ENCODE measurements at regions of chr9 and their contacts with region 1.

Region 1: DNA sequence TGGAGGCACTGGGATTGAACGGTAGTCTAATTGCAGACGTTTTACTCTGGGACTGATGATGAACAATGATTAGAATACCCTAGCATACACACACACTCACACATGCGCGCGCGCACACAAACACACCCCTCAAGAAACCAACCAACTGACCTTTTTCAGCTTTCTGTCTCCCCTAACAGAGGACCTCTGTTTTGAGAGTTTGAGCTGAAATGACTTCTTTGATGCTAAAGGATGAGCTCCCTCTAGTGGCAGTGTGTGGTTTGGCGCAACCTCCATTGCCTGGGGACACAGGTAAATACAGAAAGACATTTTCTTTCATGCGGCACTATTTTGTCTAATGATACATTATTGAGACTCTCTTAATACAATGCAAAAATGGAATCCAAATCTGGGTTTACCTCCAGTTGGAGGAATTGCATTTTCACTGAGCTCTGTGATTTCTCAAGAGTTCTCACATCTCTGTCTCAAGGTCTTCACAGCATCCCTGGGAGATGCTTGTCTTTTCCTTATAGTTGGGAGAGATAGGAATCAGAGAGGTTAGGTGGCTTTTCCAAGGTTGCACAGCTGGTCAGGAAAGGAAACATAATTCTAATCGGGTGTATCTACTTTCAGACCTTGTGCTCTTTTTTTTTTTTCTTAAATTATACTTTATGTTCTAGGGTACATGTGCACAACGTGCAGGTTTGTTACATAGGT is 187.5 kb downstream of the TMEM38B start:
- DNase-seq: peak; percentile 47 to 71
- ATAC-seq: peak; percentile 87 to 95
- H3K4me3 ChIP-seq: no peak overlapping the region
- H3K27ac ChIP-seq: no peak overlapping the region
- H3K4me1 ChIP-seq: no peaks in the 10 kb centered on the region
- CTCF ChIP-seq: peak; percentile 64
- EP300 ChIP-seq: no peak
- POLR2A ChIP-seq: no peak
- RAD21 ChIP-seq: peak; percentile 56 to 68; a peak in 4 of 5 replicates

Region 2: DNA sequence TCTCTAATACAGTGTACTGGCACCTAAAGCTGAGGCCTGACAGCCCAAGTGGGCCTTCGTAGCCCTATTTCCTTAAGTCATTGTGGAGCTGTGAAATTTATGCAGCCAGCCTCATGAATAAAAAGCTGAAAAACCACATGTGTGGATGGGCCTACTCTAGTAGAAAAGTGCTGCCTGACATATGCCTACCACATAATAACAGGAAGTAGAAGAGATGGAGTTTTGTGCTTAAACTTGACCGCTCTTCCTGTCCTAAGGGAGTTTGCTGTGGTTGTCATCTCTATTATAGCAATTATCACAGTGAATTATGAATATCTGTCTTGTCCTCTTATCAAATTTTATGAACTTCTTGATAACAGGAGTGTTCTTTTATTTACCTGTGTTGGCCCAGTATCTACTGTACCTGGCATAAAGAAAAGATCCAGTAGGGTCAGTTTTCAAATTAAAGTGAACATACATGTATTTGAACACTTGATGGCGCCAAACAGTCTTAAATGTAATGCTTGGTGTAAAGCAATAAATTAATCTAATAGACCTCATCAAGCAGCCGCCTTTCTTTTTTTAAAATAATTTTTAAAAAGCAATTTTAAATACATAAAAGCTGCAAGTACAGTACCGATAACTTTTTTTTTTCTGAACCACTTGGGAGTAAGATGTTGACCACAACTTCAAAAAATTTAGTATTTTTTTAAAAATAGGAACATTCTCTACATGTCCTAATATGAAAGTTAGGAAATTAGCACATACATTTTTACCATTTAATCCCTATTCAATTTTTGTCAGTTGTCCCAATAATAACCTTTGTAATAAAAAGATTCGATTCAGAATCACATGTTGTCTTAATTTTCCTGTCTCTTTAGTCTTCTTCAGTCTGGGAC is 272.8 kb before region 1 on chr9:
- CTCF ChIA-PET with region 1: interaction called, 10 read pairs
- POLR2A ChIA-PET with region 1: no interaction called
- DNase-seq: peak; percentile 36 to 52
- ATAC-seq: peak; percentile 70 to 86; a peak in 5 of 6 replicates
- H3K4me3 ChIP-seq: no peak overlapping the region
- H3K27ac ChIP-seq: no peak overlapping the region
- H3K4me1 ChIP-seq: no peaks in the 10 kb centered on the region
- CTCF ChIP-seq: peak; percentile 67
- EP300 ChIP-seq: no peak
- POLR2A ChIP-seq: no peak
- RAD21 ChIP-seq: peak; percentile 58 to 69

Region 3: GRCh38 chr9:105842023-105842644 is 39.7 kb before region 1 on chr9:
- CTCF ChIA-PET with region 1: interaction called, 25 read pairs
- POLR2A ChIA-PET with region 1: no interaction called
- DNase-seq: peak; percentile 34 to 47
- ATAC-seq: 0 out of 6 replicates have a peak, but pooled peaks of 1 of the 2 experiments have one; percentile 38
- H3K4me3 ChIP-seq: no peak overlapping the region
- H3K27ac ChIP-seq: no peak overlapping the region
- H3K4me1 ChIP-seq: no peaks in the 10 kb centered on the region
- CTCF ChIP-seq: peak; percentile 83
- EP300 ChIP-seq: no peak
- POLR2A ChIP-seq: no peak
- RAD21 ChIP-seq: peak; percentile 79 to 83

Region 4: DNA sequence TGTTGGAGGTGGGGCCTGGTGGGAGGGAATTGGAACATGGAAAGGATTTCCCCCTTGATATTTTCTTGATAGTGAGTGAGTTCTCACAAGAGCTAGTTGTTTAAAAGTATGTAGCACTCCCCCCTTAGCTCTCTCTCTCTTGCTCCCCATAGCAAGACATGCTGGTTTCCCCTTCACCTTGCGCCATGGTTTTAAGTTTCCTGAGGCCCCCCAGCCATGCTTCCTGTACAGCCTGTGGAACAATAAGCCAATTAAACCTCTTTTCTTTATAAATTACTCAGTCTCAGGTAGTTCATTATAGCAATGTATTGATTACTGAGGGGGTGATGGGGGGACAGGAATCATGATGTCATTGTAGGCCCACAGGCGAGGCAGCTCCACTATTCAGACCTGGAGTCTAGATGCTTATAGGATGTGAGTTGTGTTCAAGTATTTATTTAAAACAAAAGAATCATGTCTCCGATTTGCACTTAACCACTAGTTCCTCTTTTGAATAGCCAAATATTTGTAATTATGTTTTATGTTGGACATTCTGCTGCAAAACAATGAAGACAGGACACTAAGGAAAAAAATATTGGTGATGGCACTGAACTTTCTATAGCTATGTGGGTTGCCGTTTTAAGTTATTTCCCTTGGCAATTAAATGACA is 30.8 kb before region 1 on chr9:
- CTCF ChIA-PET with region 1: interaction called, 10 read pairs
- POLR2A ChIA-PET with region 1: no interaction called
- DNase-seq: no peak
- ATAC-seq: no peak
- H3K4me3 ChIP-seq: no peak overlapping the region
- H3K27ac ChIP-seq: no peak overlapping the region
- H3K4me1 ChIP-seq: no peaks in the 10 kb centered on the region
- CTCF ChIP-seq: no peak
- EP300 ChIP-seq: no peak
- POLR2A ChIP-seq: no peak
- RAD21 ChIP-seq: no peak

Region 5: GRCh38 chr9:105864248-105864898 is 17.4 kb before region 1 on chr9:
- CTCF ChIA-PET with region 1: interaction called, 12 read pairs
- POLR2A ChIA-PET with region 1: no interaction called
- DNase-seq: no peak
- ATAC-seq: no peak
- H3K4me3 ChIP-seq: no peak overlapping the region
- H3K27ac ChIP-seq: no peak overlapping the region
- H3K4me1 ChIP-seq: no peaks in the 10 kb centered on the region
- CTCF ChIP-seq: no peak
- EP300 ChIP-seq: no peak
- POLR2A ChIP-seq: no peak
- RAD21 ChIP-seq: no peak

Region 6: DNA sequence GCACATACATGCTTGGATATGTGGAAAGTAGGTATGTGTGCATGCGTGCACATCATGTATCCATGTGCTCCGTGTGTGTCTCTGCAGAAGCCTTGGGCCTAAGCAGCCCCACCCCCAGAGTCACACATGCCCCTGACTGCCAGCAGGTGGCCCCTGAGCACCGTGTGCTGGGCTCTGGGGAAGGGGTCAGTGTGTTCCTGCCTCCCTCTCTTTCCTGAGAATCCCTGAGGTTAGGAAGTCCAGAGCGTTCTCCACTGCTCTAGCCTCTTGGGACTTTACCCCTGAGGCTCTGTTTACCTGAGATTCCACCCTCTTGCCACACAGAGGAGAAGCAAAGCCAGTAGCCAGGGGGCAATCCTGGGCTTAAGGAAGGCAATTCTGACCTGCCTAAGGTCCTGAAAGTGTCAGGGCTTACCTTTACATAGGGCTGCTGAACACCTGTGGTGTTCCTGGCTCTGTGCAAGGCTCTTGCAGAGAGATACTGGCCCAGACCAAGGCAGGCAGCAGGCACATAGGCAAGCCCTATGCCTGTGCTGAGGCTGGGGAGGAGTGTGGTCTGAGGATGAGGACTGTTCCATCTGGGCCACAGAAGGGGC is 19.8 kb after region 1 on chr9:
- CTCF ChIA-PET with region 1: interaction called, 10 read pairs
- POLR2A ChIA-PET with region 1: no interaction called
- DNase-seq: peak; percentile 52 to 54
- ATAC-seq: peak; percentile 99 to 100
- H3K4me3 ChIP-seq: no peak overlapping the region
- H3K27ac ChIP-seq: no peak overlapping the region
- H3K4me1 ChIP-seq: no peaks in the 10 kb centered on the region
- CTCF ChIP-seq: peak; percentile 51
- EP300 ChIP-seq: no peak
- POLR2A ChIP-seq: no peak
- RAD21 ChIP-seq: peak; percentile 76 to 86

Region 7: GRCh38 chr9:105911104-105911911 is 29.5 kb after region 1 on chr9:
- CTCF ChIA-PET with region 1: interaction called, 19 read pairs
- POLR2A ChIA-PET with region 1: no interaction called
- DNase-seq: peak in 1 of 2 experiments; percentile 33
- ATAC-seq: peak; percentile 23 to 65; a peak in 3 of 6 replicates
- H3K4me3 ChIP-seq: no peak overlapping the region
- H3K27ac ChIP-seq: peak overlapping the region; percentile 49 to 74
- H3K4me1 ChIP-seq: peaks cover 33% of the 10 kb centered on the region
- CTCF ChIP-seq: no peak
- EP300 ChIP-seq: no peak
- POLR2A ChIP-seq: no peak
- RAD21 ChIP-seq: no peak

Region 8: GRCh38 chr9:105978336-105978735 is 96.5 kb after region 1 on chr9:
- CTCF ChIA-PET with region 1: no interaction called
- POLR2A ChIA-PET with region 1: no interaction called
- DNase-seq: no peak
- ATAC-seq: no peak
- H3K4me3 ChIP-seq: no peak overlapping the region
- H3K27ac ChIP-seq: no peak overlapping the region
- H3K4me1 ChIP-seq: no peaks in the 10 kb centered on the region
- CTCF ChIP-seq: no peak
- EP300 ChIP-seq: no peak
- POLR2A ChIP-seq: no peak
- RAD21 ChIP-seq: no peak

Measured in A549 (cell line).